Breast epithelium (tissue), 4 donors: ENCODE measurements at regions of chr3 and their contacts with region 1.

Region 1: DNA sequence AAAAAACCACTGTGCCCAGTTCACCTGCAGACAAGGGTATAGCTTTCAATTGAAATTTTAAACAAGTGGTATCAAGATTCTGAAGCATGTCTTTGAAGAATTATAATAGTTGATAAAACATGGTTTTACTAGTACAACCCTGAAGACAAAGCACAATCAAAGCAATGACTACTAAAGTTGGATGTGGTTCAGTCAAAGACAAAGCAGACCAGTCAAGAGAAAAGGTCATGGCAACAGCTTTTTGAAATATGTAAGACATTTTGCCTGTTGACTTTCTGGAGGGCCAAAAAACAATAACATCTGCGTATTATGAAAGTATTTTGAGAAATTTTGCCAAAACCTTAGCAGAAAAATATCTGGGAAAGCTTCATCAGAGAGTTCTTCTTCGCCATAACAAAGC is 1393.6 kb downstream of the SI start:
- DNase-seq: no peak
- H3K4me3 ChIP-seq: no peak overlapping the region
- H3K27ac ChIP-seq: no peak overlapping the region
- H3K4me1 ChIP-seq: no peaks in the 10 kb centered on the region
- H3K27me3 ChIP-seq: no peaks in the 10 kb centered on the region
- CTCF ChIP-seq: no peak
- POLR2A ChIP-seq: no peak

Region 2: DNA sequence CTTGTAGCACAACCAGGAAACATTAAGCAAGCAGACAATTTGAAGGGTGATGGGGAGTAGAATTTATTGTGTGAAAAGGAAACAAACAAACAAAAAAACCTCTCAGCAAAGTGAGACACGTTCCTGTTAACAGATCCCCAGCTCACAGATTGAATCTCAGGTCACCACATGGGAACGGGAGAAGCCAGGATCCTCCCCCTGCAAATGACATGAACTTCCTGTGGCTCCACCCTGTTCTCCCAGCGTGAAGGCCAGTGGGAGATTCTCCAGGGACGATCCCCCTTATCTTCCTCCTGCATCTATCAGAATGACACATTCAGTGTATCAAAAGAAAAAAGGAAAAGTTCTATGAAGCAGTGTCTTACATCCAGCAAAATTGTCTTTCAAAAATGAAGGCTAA is 699.9 kb before region 1 on chr3:
- intact Hi-C with region 1: loop called (anchors 5 kb)
- DNase-seq: no peak
- H3K4me3 ChIP-seq: no peak overlapping the region
- H3K27ac ChIP-seq: no peak overlapping the region
- H3K4me1 ChIP-seq: no peaks in the 10 kb centered on the region
- H3K27me3 ChIP-seq: no peaks in the 10 kb centered on the region
- CTCF ChIP-seq: no peak
- POLR2A ChIP-seq: no peak

Region 3: GRCh38 chr3:163708428-163708827 is 23.8 kb after region 1 on chr3:
- intact Hi-C with region 1: no loop called
- DNase-seq: no peak
- H3K4me3 ChIP-seq: no peak overlapping the region
- H3K27ac ChIP-seq: no peak overlapping the region
- H3K4me1 ChIP-seq: no peaks in the 10 kb centered on the region
- H3K27me3 ChIP-seq: no peaks in the 10 kb centered on the region
- CTCF ChIP-seq: no peak
- POLR2A ChIP-seq: no peak

Region 4: GRCh38 chr3:164080208-164080607 is 395.6 kb after region 1 on chr3:
- intact Hi-C with region 1: no loop called
- DNase-seq: no peak
- H3K4me3 ChIP-seq: no peak overlapping the region
- H3K27ac ChIP-seq: no peak overlapping the region
- H3K4me1 ChIP-seq: no peaks in the 10 kb centered on the region
- H3K27me3 ChIP-seq: no peaks in the 10 kb centered on the region
- CTCF ChIP-seq: no peak
- POLR2A ChIP-seq: no peak